GM13976 (cell line): ENCODE measurements at regions of chr5 and their contacts with region 1.

Region 1: DNA sequence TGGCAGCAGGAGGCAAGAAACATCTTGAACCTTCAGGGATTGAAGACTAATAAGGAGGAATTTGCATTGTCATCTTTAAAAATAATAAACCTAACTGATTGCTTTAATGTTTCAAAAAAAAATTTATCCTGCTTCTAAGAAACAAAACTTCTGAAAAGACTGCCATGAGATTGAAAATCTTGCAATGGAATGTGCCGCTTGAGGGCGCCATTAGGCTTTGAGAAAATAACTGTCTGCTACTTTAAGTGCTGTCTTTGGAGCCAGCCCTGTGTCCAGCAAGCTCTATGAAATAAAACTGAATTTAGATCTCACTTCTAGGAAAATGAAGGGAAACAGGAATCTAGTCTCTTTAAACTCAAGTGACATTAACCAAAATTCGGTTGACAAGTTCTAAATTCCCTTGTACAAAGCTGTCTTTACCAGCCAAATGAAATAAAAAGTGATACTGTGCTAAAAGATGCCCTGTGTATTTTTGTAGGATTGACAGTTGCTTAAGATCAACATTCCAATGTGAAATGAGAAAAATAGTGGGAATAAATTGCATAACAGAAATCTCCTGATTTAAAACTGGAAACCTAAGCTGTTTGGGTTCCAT is 79.4 kb downstream of the ESM1 start:
- DNase-seq: peak; percentile 44
- CTCF ChIP-seq: peak; percentile 38

Region 2: DNA sequence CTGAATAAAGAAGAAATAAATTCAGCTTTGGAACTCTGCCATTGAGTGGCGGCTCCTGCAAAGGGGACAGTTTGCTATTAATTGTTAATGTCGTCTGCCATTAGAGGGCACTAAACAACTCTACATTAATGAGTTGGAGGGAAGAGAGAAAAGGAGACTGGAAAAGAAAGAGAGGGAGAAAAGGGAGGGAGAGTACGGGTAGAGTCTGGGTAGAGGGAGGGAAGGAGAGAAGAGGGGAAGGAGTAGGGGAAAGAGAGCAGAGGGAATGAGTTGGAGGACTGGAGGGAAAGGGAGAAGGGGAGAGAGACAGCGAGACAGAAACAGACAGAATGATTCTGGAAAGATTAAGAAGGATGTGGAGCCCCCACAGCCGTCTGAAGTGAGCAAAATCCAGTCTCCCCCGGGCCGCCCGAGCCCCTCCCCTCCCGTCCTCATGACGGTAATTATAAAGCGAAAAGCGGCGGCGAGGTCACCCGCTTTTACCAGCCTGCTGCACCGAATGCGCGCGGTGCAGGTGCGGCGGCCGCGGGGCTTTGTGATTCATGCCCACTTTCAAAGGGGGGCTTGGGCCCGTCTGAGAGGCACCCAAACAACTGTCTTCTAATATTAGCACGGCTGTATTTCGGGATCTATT is 1427.5 kb before region 1 on chr5:
- in situ Hi-C with region 1: no loop called
- DNase-seq: peak; percentile 48
- CTCF ChIP-seq: peak; percentile 58

Region 3: GRCh38 chr5:55159763-55160492 is 253.9 kb after region 1 on chr5 and contains the start of gene GPX8:
- in situ Hi-C with region 1: loop called (anchors 10 kb)
- DNase-seq: peak; percentile 31
- CTCF ChIP-seq: peak; percentile 21

Region 4: DNA sequence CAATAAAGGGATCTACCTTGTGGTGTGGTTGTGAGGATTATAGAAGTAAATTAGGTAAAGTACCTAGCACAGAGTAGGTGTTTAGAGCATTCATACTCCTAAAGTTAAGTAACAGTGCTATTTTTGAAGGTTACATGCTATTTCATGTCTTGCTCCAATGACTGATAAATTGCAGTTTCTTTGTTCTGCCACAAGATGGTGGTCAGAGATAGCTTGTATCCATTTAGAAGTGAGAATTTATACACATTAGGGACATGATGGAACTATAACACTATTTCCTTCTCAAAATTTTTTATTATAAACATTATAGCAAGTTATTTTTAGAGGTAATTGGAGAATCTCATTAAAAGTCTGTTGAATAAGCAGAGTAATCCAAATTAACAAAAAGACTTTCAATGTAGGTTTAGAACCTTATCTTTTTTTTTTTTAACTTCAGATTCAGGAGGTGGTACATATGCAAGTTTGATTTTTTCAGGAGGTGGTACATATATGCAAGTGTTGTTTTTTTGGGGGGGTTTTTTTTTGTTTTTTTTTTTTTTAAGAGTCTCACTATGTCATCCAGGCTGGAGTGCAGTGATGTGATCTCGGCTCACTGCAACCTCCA is 418.9 kb after region 1 on chr5:
- in situ Hi-C with region 1: no loop called
- DNase-seq: peak; percentile 32
- CTCF ChIP-seq: peak; percentile 45